K562 (cell line): ENCODE measurements at regions of chr10 and their contacts with region 1.

Region 1: DNA sequence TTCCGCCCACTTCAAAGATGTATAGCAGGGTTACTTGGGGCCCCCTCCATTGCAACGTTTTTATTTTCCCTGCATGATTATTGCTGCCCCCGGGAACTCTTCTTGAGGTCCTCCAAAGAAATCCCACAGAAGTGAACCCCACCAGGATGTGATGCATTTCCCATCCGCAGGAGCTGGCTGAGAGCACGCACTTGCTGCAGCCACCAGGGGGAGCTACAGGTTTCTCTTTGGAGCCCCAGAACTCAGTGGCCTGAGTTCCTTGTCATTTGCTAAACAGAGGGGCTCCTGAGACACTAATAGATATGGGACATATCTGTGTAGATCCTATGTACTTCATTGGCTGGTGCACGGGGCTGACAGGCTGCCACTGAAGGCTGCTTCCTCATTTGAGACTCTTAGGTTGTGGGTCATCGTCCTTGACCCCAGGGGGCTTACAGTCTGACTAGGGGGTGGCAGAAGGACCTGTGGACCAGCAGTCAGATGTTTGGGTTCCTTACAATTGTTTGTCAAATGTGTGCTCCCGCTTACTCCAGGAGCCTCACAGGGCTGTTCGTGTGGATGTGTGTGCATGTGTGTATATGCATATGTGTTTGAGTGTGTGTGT is 52.3 kb upstream of the ENO4 start:
- DNase-seq: peak; percentile 60 to 73 (median 67)
- ATAC-seq: peak; percentile 94
- H3K4me3 ChIP-seq: no peak overlapping the region
- H3K27ac ChIP-seq: no peak overlapping the region
- H3K4me1 ChIP-seq: no peaks in the 10 kb centered on the region
- H3K27me3 ChIP-seq: peaks cover 0 to 18% of the 10 kb centered on the region in 2 experiments; a peak in 2 of 5 replicates
- CTCF ChIP-seq: peak; percentile 81 to 85 (median 83)
- EP300 ChIP-seq: no peak
- POLR2A ChIP-seq: no peak
- RAD21 ChIP-seq: peak; percentile 76 to 87

Region 2: DNA sequence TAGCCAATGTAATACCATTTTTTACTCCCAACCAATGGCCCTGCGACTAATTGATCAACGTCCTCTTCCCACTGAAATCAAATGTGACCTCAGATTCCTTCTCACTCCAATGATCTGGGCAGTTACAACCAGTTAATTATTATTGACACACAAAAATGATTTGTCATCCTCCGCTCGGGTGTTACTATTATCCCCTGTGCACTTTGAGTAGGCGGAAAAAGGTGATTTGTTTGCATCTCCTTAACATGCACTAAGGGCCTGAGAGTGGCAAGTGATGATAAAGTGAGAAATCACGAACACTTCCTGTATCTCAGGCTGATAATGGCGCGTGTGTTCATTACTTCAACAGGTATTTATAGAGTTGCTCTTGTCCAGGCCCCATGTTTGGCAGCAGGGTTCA is 292.2 kb before region 1 on chr10:
- CTCF ChIA-PET with region 1: no interaction called
- POLR2A ChIA-PET with region 1: no interaction called
- in situ Hi-C with region 1: no loop called
- intact Hi-C with region 1: no loop called
- DNase-seq: no peak
- ATAC-seq: no peak
- H3K4me3 ChIP-seq: no peak overlapping the region
- H3K27ac ChIP-seq: no peak overlapping the region
- H3K4me1 ChIP-seq: no peaks in the 10 kb centered on the region
- H3K27me3 ChIP-seq: no peaks in the 10 kb centered on the region
- CTCF ChIP-seq: no peak
- EP300 ChIP-seq: no peak
- POLR2A ChIP-seq: no peak
- RAD21 ChIP-seq: no peak

Region 3: DNA sequence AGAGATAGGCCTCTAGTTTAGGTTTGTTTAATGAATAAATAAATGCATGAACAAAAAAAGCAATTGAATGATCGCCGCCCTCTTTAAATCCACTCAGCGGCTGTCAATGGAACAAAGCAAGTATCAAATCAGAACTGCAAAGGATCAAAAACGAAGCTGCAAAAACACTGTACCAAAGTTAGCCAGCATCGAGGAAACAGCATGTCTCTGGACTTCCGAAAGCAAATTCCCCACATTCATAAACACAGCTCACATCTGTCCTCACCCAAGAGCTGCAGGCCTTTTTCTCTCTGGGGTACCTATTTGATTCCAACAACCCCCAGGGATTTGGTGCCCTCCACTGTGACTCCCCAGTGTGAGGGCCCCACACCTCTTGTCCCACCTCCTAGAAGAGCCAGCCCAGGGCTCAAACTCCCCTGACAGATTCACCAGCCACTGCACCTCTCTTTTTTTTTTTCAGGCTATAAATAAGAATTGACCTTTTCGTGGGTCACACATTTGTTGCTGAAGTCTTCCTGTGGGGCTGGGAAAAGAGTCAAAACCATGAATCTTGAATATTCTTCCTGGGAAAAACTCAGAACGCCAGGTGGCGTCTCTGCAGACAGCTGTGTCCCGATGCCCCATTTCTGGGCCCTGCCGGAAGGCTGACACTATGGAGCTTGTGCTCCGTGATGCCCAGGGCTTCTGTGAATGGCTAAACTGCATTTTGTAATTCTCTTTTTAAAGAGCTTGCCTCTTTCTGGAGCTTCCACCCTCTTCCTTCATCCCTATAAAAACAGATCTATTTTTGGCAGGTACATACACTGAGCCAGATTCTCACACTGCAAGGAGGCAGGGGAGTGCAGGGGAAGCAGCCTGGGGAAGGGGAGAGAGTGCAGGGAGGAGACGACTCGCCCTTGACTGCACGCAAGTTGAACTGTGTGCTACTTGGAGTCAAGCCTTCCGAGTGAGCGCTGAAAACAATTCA is 106.4 kb before region 1 on chr10:
- CTCF ChIA-PET with region 1: no interaction called
- POLR2A ChIA-PET with region 1: no interaction called
- in situ Hi-C with region 1: loop called (anchors 25 kb)
- intact Hi-C with region 1: no loop called
- DNase-seq: peak in 2 of 4 experiments; percentile 14 to 17
- ATAC-seq: no peak
- H3K4me3 ChIP-seq: no peak overlapping the region
- H3K27ac ChIP-seq: no peak overlapping the region
- H3K4me1 ChIP-seq: no peaks in the 10 kb centered on the region; a peak in 1 of 5 replicates
- H3K27me3 ChIP-seq: peaks cover 0 to 24% of the 10 kb centered on the region in 2 experiments; a peak in 1 of 5 replicates
- CTCF ChIP-seq: peak; percentile 17 to 30 (median 24); a peak in 3 of 6 replicates
- EP300 ChIP-seq: no peak
- POLR2A ChIP-seq: no peak
- RAD21 ChIP-seq: 0 out of 4 replicates have a peak, but pooled peaks of 1 of the 2 experiments have one; percentile 14

Region 4: GRCh38 chr10:116888380-116889055 is 91.5 kb after region 1 on chr10:
- CTCF ChIA-PET with region 1: no interaction called
- POLR2A ChIA-PET with region 1: no interaction called
- in situ Hi-C with region 1: no loop called
- intact Hi-C with region 1: no loop called
- DNase-seq: no peak
- ATAC-seq: no peak
- H3K4me3 ChIP-seq: no peak overlapping the region
- H3K27ac ChIP-seq: no peak overlapping the region
- H3K4me1 ChIP-seq: no peaks in the 10 kb centered on the region
- H3K27me3 ChIP-seq: no peaks in the 10 kb centered on the region
- CTCF ChIP-seq: no peak
- EP300 ChIP-seq: no peak
- POLR2A ChIP-seq: no peak
- RAD21 ChIP-seq: no peak

Region 5: GRCh38 chr10:117074621-117075020 is 277.6 kb after region 1 on chr10:
- CTCF ChIA-PET with region 1: no interaction called
- POLR2A ChIA-PET with region 1: no interaction called
- in situ Hi-C with region 1: no loop called
- intact Hi-C with region 1: loop called (anchors 5 kb)
- DNase-seq: no peak
- ATAC-seq: peak; percentile 51; the same call in 1 of the 3 replicates
- H3K4me3 ChIP-seq: no peak overlapping the region
- H3K27ac ChIP-seq: no peak overlapping the region
- H3K4me1 ChIP-seq: no peaks in the 10 kb centered on the region; a peak in 1 of 5 replicates
- H3K27me3 ChIP-seq: peaks cover 3 to 4% of the 10 kb centered on the region in 2 experiments; a peak in 2 of 5 replicates
- CTCF ChIP-seq: peak in 2 of 3 experiments; percentile 23 to 40; a peak in 2 of 6 replicates
- EP300 ChIP-seq: no peak
- POLR2A ChIP-seq: no peak
- RAD21 ChIP-seq: no peak

Region 6: GRCh38 chr10:117167789-117168674 is 371.0 kb after region 1 on chr10:
- CTCF ChIA-PET with region 1: interaction called, 13 read pairs
- POLR2A ChIA-PET with region 1: interaction called, 3 read pairs
- in situ Hi-C with region 1: no loop called
- intact Hi-C with region 1: no loop called
- DNase-seq: peak; percentile 48 to 84 (median 83)
- ATAC-seq: peak; percentile 98
- H3K4me3 ChIP-seq: no peak overlapping the region
- H3K27ac ChIP-seq: no peak overlapping the region
- H3K4me1 ChIP-seq: peaks cover 0 to 29% of the 10 kb centered on the region in 2 experiments; a peak in 2 of 5 replicates
- H3K27me3 ChIP-seq: peaks cover 18 to 54% of the 10 kb centered on the region in 2 experiments; a peak in 4 of 5 replicates
- CTCF ChIP-seq: peak; percentile 64 to 75 (median 70)
- EP300 ChIP-seq: no peak
- POLR2A ChIP-seq: no peak
- RAD21 ChIP-seq: peak; percentile 34 to 61; a peak in 3 of 4 replicates